Activated B cell treated with CpG ODN at 0.5 μM for 24 hours (primary cell): ENCODE measurements at regions of chr7 and their contacts with region 1.

Region 1: DNA sequence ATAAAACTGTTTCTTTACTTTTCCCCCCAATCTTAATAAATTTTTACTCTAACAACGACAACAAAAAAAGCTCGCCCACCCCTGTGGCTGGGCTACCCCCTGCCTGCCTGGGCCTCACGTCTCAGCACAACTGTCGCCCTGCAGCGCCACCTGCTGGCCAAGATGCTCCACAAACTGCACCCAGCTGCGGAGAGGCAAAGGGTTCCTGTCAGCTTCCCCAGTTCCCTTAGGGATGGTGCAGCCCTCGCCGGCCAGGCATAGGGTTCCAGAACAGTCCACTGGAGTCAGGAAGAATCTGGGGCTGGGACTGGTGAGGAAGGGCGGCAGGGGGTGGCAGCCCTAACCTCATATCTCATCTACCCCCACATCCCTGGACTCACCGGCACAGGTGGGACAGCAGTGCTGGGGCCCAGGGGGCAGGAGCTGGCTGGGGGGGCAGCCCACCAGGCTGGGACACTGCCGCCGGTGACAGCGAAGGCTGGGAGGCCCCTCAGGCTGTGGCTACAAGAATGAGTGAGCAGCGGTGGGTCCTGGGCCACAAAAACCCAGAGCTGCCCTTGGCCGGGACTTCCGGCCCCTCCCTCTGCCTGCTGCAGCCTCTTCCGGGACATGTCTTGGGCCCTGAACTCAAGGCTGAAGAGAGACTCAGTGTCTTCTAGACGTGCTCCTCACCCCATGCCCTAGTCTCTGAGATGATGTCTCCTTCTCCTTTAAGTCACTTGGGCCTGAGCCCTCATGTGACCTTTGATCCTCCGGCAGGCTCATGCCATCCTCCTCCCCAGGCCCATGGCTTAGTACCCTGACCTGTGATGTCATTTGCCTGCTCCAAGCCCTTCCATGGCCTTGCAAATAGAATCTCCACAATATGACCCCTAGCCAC is 21.2 kb downstream of the ATP6V1F start:
- DNase-seq: peak; percentile 82
- ATAC-seq: peak; percentile 85
- H3K4me3 Mint-ChIP-seq: peak overlapping the region; percentile 77
- H3K27ac Mint-ChIP-seq: no peak overlapping the region
- H3K4me1 Mint-ChIP-seq: peaks cover 3% of the 10 kb centered on the region
- H3K27me3 Mint-ChIP-seq: peaks cover 3% of the 10 kb centered on the region
- CTCF ChIP-seq: no peak

Region 2: GRCh38 chr7:128697302-128697905 is 186.5 kb before region 1 on chr7:
- CTCF ChIA-PET with region 1: no interaction called
- POLR2A ChIA-PET with region 1: no interaction called
- intact Hi-C with region 1: loop called (anchors 5 kb)
- DNase-seq: peak; percentile 48
- ATAC-seq: peak; percentile 82
- H3K4me3 Mint-ChIP-seq: peak overlapping the region; percentile 80
- H3K27ac Mint-ChIP-seq: peak overlapping the region; percentile 41
- H3K4me1 Mint-ChIP-seq: peaks cover 7% of the 10 kb centered on the region
- H3K27me3 Mint-ChIP-seq: peaks cover 51% of the 10 kb centered on the region
- CTCF ChIP-seq: no peak

Region 3: GRCh38 chr7:128781126-128781525 is 102.7 kb before region 1 on chr7:
- CTCF ChIA-PET with region 1: no interaction called
- POLR2A ChIA-PET with region 1: no interaction called
- intact Hi-C with region 1: no loop called
- DNase-seq: no peak
- ATAC-seq: no peak
- H3K4me3 Mint-ChIP-seq: no peak overlapping the region
- H3K27ac Mint-ChIP-seq: no peak overlapping the region
- H3K4me1 Mint-ChIP-seq: no peaks in the 10 kb centered on the region
- H3K27me3 Mint-ChIP-seq: no peaks in the 10 kb centered on the region
- CTCF ChIP-seq: no peak

Region 4: GRCh38 chr7:128791121-128791961 is 92.5 kb before region 1 on chr7:
- CTCF ChIA-PET with region 1: no interaction called
- POLR2A ChIA-PET with region 1: no interaction called
- intact Hi-C with region 1: loop called (anchors 1 kb)
- DNase-seq: peak; percentile 71
- ATAC-seq: peak; percentile 91
- H3K4me3 Mint-ChIP-seq: peak overlapping the region; percentile 87
- H3K27ac Mint-ChIP-seq: no peak overlapping the region
- H3K4me1 Mint-ChIP-seq: peaks cover 10% of the 10 kb centered on the region
- H3K27me3 Mint-ChIP-seq: no peaks in the 10 kb centered on the region
- CTCF ChIP-seq: no peak

Region 5: GRCh38 chr7:128841921-128842651 is 41.8 kb before region 1 on chr7:
- CTCF ChIA-PET with region 1: interaction called, 13 read pairs
- POLR2A ChIA-PET with region 1: no interaction called
- intact Hi-C with region 1: loop called (anchors 1 kb)
- DNase-seq: peak; percentile 49
- ATAC-seq: peak; percentile 67
- H3K4me3 Mint-ChIP-seq: no peak overlapping the region
- H3K27ac Mint-ChIP-seq: no peak overlapping the region
- H3K4me1 Mint-ChIP-seq: peaks cover 4% of the 10 kb centered on the region
- H3K27me3 Mint-ChIP-seq: peaks cover 2% of the 10 kb centered on the region
- CTCF ChIP-seq: peak; percentile 29